Activated B cell treated with CpG ODN at 0.5 μM for 24 hours (primary cell): ENCODE measurements at regions of chr10 and their contacts with region 1.

Region 1: GRCh38 chr10:96043033-96043932 is at the start of gene CCNJ:
- DNase-seq: peak; percentile 83
- ATAC-seq: peak; percentile 88
- H3K4me3 Mint-ChIP-seq: peak within 1 kb of the TSS; percentile 93
- H3K27ac Mint-ChIP-seq: peak within 1 kb of the TSS; percentile 80
- H3K4me1 Mint-ChIP-seq: peaks cover 41% of the 10 kb centered on the region
- H3K27me3 Mint-ChIP-seq: no peaks in the 10 kb centered on the region
- CTCF ChIP-seq: no peak
- total RNA-seq, gene CCNJ: 9.8 and 10.2 TPM in 2 replicates

Region 2: GRCh38 chr10:95561182-95562075 is 481.9 kb before region 1 on chr10 and contains the start of gene SORBS1:
- CTCF ChIA-PET with region 1: no interaction called
- POLR2A ChIA-PET with region 1: no interaction called
- intact Hi-C with region 1: loop called (anchors 1 kb)
- DNase-seq: peak; percentile 83
- ATAC-seq: peak; percentile 98
- H3K4me3 Mint-ChIP-seq: peak within 1 kb of the TSS; percentile 98
- H3K27ac Mint-ChIP-seq: peak within 1 kb of the TSS; percentile 73
- H3K4me1 Mint-ChIP-seq: peaks cover 10% of the 10 kb centered on the region
- H3K27me3 Mint-ChIP-seq: peaks cover 17% of the 10 kb centered on the region
- CTCF ChIP-seq: no peak
- total RNA-seq, gene SORBS1: 0.37 and 0.42 TPM in 2 replicates

Region 3: DNA sequence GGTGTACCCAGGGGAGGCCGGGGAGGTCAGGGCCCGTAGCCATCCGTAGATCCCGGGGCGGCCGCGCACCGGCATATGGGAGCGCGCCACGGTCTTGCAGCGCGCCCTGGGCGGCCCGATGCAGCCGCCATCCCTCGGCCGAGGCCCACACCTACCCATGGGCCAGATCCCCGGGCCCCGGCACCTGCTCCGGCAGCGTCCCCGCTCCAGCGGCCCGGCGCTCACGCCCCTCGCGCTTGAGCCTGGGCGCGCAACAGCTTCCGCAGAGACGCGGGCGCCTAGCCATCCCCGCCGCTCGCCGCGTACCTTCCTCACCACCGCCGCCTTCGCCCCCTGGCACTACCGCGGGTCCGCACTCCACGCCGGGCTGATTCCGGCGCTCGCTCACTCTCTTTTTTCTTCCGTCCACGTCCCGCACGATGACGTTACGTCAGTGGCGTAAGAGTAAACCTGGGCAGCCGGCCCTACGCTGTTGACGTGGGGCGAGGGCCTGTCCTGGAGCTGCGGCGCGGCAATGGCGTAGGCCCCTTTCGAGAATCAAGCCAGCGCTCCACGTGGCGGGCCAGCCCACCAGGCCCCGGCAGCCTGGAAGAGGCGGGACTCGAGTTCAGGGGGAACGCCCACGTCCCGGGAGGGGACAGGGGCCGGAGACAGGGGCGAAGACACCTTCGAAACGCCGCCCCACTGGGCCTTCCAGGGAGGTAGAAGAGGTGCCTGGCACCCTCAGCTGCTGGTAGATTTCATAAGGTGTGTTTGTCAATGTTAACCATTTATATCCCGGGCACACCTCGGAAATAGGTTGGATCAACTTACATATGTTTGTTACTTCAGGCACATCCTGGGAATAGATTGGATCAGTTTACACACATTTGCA is 386.8 kb before region 1 on chr10 and contains the start of gene ALDH18A1:
- CTCF ChIA-PET with region 1: no interaction called
- POLR2A ChIA-PET with region 1: interaction called, 5 read pairs
- intact Hi-C with region 1: loop called (anchors 10 kb)
- DNase-seq: peak; percentile 94
- ATAC-seq: peak; percentile 96
- H3K4me3 Mint-ChIP-seq: peak within 1 kb of the TSS; percentile 98
- H3K27ac Mint-ChIP-seq: peak within 1 kb of the TSS; percentile 86
- H3K4me1 Mint-ChIP-seq: peaks cover 31% of the 10 kb centered on the region
- H3K27me3 Mint-ChIP-seq: no peaks in the 10 kb centered on the region
- CTCF ChIP-seq: no peak
- total RNA-seq, gene ALDH18A1: 45.9 and 53.0 TPM in 2 replicates

Region 4: GRCh38 chr10:95896071-95896846 is 147.0 kb before region 1 on chr10:
- CTCF ChIA-PET with region 1: no interaction called
- POLR2A ChIA-PET with region 1: no interaction called
- intact Hi-C with region 1: no loop called
- DNase-seq: no peak
- ATAC-seq: peak; percentile 72
- H3K4me3 Mint-ChIP-seq: no peak overlapping the region
- H3K27ac Mint-ChIP-seq: peak overlapping the region; percentile 80
- H3K4me1 Mint-ChIP-seq: peaks cover 18% of the 10 kb centered on the region
- H3K27me3 Mint-ChIP-seq: no peaks in the 10 kb centered on the region
- CTCF ChIP-seq: no peak

Region 5: GRCh38 chr10:95907456-95908253 is 135.6 kb before region 1 on chr10 and contains the start of gene CC2D2B:
- CTCF ChIA-PET with region 1: no interaction called
- POLR2A ChIA-PET with region 1: no interaction called
- intact Hi-C with region 1: loop called (anchors 5 kb)
- DNase-seq: peak; percentile 70
- ATAC-seq: peak; percentile 91
- H3K4me3 Mint-ChIP-seq: peak within 1 kb of the TSS; percentile 94
- H3K27ac Mint-ChIP-seq: peak within 1 kb of the TSS; percentile 92
- H3K4me1 Mint-ChIP-seq: peaks cover 11% of the 10 kb centered on the region
- H3K27me3 Mint-ChIP-seq: no peaks in the 10 kb centered on the region
- CTCF ChIP-seq: no peak
- total RNA-seq, gene CC2D2B: 1.2 and 2.0 TPM in 2 replicates

Region 6: DNA sequence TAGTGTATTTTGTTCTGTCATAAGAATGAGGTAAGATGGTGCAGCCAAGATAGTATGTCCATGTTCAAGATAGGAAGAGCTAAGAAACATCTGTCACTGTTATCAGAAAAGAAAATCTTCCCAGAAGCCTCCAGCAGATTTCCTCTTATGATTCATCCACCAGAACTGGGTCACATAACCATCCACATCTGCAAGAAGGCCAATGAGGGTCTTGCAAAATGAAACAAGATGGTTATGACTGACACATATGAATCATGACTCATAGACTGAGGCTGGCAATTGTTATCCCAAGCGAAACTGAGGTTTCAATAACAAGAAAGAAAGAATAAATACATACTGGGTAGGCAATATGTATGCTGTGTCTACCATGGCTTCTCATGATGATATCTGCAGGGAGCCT is 30.4 kb after region 1 on chr10:
- CTCF ChIA-PET with region 1: no interaction called
- POLR2A ChIA-PET with region 1: no interaction called
- intact Hi-C with region 1: no loop called
- DNase-seq: no peak
- ATAC-seq: peak; percentile 14
- H3K4me3 Mint-ChIP-seq: no peak overlapping the region
- H3K27ac Mint-ChIP-seq: no peak overlapping the region
- H3K4me1 Mint-ChIP-seq: peaks cover 4% of the 10 kb centered on the region
- H3K27me3 Mint-ChIP-seq: no peaks in the 10 kb centered on the region
- CTCF ChIP-seq: no peak

Region 7: GRCh38 chr10:96089670-96090462 is 46.6 kb after region 1 on chr10:
- CTCF ChIA-PET with region 1: no interaction called
- POLR2A ChIA-PET with region 1: interaction called, 12 read pairs
- intact Hi-C with region 1: loop called (anchors 1 kb)
- DNase-seq: peak; percentile 88
- ATAC-seq: peak; percentile 85
- H3K4me3 Mint-ChIP-seq: peak overlapping the region; percentile 95
- H3K27ac Mint-ChIP-seq: peak overlapping the region; percentile 98
- H3K4me1 Mint-ChIP-seq: peaks cover 8% of the 10 kb centered on the region
- H3K27me3 Mint-ChIP-seq: peaks cover 28% of the 10 kb centered on the region
- CTCF ChIP-seq: no peak